H1 (cell line): ENCODE measurements at regions of chr5 and their contacts with region 1.

Region 1: GRCh38 chr5:170216266-170216864 is 16.4 kb upstream of the C5orf58 start:
- DNase-seq: no peak
- H3K4me3 ChIP-seq: no peak overlapping the region
- H3K27ac ChIP-seq: no peak overlapping the region
- H3K4me1 ChIP-seq: peaks cover 0 to 6% (median 1%) of the 10 kb centered on the region in 4 experiments; a peak in 2 of 7 replicates
- H3K27me3 ChIP-seq: peaks cover 0 to 19% (median 5%) of the 10 kb centered on the region in 4 experiments; a peak in 5 of 7 replicates
- CTCF ChIP-seq: peak; percentile 22 to 83 (median 76)
- EP300 ChIP-seq: no peak
- POLR2A ChIP-seq: no peak
- RAD21 ChIP-seq: peak; percentile 97

Region 2: DNA sequence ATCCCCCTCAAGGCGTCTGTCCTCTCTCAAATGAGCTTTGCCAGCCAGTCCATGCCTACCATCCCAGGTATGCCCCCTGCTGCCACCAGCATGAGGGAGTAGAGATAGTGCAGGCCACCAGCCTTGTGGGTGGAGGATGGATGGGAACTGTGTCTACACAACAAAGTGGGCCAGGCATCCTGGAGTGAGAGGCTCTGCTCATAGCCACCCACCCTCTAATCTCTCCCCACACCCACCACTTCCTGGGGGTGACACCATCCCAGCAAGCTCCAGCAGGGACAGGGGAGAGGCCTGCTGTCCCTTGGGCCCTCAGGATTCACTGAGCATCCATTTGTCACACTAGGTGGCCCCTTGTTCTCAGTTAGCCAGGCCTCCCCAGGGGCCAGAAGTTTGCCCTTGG is 136.1 kb before region 1 on chr5:
- CTCF ChIA-PET with region 1: interaction called, 10 read pairs
- POLR2A ChIA-PET with region 1: no interaction called
- DNase-seq: no peak
- H3K4me3 ChIP-seq: no peak overlapping the region
- H3K27ac ChIP-seq: no peak overlapping the region
- H3K4me1 ChIP-seq: no peaks in the 10 kb centered on the region
- H3K27me3 ChIP-seq: no peaks in the 10 kb centered on the region
- CTCF ChIP-seq: no peak
- EP300 ChIP-seq: no peak
- POLR2A ChIP-seq: no peak
- RAD21 ChIP-seq: no peak

Region 3: GRCh38 chr5:170195961-170196360 is 20.4 kb before region 1 on chr5:
- CTCF ChIA-PET with region 1: interaction called, 19 read pairs
- POLR2A ChIA-PET with region 1: no interaction called
- DNase-seq: no peak
- H3K4me3 ChIP-seq: no peak overlapping the region
- H3K27ac ChIP-seq: no peak overlapping the region
- H3K4me1 ChIP-seq: no peaks in the 10 kb centered on the region; a peak in 2 of 7 replicates
- H3K27me3 ChIP-seq: no peaks in the 10 kb centered on the region
- CTCF ChIP-seq: no peak
- EP300 ChIP-seq: no peak
- POLR2A ChIP-seq: no peak
- RAD21 ChIP-seq: no peak

Region 4: DNA sequence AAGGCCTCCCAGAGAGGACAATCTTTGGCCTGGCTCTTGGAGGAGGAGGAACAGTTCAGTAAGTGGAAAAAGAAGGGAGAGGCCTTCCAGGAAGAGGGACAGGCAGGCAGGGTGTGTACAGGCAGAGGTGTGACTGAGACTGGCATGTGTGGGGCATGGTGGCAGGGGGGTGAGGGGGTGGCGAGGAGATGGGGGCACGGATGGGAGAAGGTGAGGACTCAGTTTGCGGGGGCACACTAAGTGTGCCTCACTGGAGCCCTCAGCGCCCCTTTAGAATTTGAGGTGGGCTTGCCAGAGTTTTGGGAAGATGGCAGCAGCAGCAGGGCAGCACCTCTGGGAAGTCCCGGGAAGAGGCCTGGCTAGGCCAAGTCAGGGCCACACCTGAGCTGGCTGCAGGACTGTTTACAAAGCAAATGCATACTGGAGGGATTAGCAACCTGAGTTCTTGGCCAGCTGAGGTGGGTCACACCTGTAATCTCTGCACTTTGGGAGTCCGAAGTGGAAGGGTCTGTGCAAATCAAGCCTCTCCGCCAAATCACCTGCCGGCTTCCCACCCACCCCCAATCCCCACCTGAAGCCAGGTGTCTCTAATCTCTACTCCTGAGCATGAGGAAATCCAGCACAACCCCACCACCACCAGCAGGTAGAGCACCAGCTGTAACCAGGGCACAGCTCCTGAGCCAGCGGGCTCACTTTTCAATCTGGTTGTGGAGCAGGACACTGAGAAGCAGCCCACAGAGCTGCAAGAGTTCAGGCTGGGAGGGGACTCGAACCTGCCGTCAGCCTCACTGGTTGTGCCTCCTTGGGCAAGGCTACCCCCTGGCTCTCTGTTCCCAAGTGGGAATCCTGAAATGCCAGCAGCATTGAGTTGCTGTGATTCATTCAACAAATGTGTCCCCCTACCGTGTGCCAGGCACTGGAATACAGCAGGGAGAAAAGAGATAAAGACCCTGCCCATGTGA is 556.9 kb after region 1 on chr5:
- CTCF ChIA-PET with region 1: no interaction called
- POLR2A ChIA-PET with region 1: no interaction called
- DNase-seq: no peak
- H3K4me3 ChIP-seq: no peak overlapping the region
- H3K27ac ChIP-seq: no peak overlapping the region; the same call in 1 of the 2 replicates
- H3K4me1 ChIP-seq: peaks cover 4 to 15% (median 8%) of the 10 kb centered on the region in 4 experiments
- H3K27me3 ChIP-seq: no peaks in the 10 kb centered on the region; a peak in 1 of 7 replicates
- CTCF ChIP-seq: peak in 1 of 3 experiments; percentile 8; a peak in 1 of 4 replicates
- EP300 ChIP-seq: no peak
- POLR2A ChIP-seq: no peak
- RAD21 ChIP-seq: no peak; a peak in 1 of 4 replicates